Common myeloid progenitor, CD34-positive (primary cell): ENCODE measurements at regions of chr11 and their contacts with region 1.

Region 1: GRCh38 chr11:46489661-46490560 is 98.3 kb upstream of the CHRM4 start:
- DNase-seq: peak; percentile 72 to 82 (median 78)
- H3K4me3 ChIP-seq: no peak overlapping the region
- H3K27ac ChIP-seq: no peak overlapping the region
- H3K4me1 ChIP-seq: peaks cover 4 to 9% (median 8%) of the 10 kb centered on the region in 4 experiments
- H3K27me3 ChIP-seq: no peaks in the 10 kb centered on the region

Region 2: DNA sequence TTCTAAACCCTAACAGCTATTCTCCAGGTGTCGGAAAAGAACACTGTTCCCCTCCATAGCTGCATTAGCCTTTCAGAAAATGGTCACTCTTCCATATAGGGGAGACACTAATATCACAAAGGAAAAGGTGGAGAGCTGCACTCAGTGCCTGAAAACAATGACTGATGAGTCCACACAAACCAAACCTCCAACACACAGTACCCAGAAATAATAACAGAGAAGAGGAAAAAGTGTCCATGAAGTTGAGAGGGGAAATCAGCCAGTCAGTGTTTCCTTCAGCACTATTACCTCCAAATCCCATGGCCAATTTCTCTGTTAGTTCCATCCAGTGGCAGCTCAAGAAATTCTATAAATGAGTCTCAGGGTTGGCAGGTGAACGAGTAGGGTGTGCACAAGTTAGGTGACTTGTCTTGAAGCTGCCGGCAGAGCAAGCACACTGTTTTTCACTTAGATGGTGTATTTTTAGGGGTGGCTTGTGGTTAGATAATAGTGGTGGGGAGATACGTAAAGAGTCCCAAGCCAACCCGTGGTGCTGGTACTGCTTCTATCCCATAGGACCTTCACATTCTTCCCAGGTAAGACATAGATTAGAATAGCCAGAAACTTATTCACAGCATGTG is 13.9 kb before region 1 on chr11:
- CTCF ChIA-PET with region 1: interaction called, 81 read pairs
- POLR2A ChIA-PET with region 1: no interaction called
- DNase-seq: no peak
- H3K4me3 ChIP-seq: no peak overlapping the region
- H3K27ac ChIP-seq: no peak overlapping the region
- H3K4me1 ChIP-seq: no peaks in the 10 kb centered on the region
- H3K27me3 ChIP-seq: no peaks in the 10 kb centered on the region

Region 3: DNA sequence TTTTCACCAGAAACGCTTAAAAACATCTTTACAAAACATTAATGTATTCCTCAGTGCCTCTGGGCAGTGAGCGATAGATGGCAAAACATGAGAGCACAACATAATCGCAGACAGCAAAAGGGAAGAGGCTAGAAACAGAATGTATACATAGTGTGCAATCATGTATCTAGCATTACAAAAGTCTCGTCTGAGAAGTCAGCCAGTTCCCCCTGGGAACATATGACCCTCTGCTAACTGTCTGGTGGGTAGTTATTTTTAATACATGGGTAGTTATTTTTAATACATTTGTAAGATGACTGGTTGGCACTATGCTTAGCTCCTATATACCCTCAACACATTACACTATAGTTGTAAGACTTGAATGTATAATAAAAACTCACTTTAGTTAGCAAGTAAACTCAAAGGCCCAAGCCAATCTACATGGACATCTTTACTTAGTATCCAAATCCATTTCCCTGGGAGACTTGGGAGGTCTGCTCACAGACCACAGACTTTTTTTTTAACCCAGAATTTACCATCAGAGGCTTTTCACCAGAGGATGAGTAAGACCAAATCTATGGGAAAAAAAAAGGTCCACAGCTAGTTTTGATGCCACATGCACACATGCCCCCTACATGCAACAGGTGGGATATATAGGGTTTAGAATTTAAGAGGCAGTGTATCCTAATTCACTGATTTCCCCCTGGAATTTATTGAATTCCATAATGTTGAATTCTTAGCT is 32.2 kb after region 1 on chr11:
- CTCF ChIA-PET with region 1: interaction called, 18 read pairs
- POLR2A ChIA-PET with region 1: interaction called, 3 read pairs
- DNase-seq: peak in 2 of 3 donors; percentile 36 to 37
- H3K4me3 ChIP-seq: no peak overlapping the region
- H3K27ac ChIP-seq: no peak overlapping the region
- H3K4me1 ChIP-seq: peaks cover 0 to 4% (median 0%) of the 10 kb centered on the region in 4 experiments
- H3K27me3 ChIP-seq: no peaks in the 10 kb centered on the region

Region 4: GRCh38 chr11:46554205-46555055 is 64.5 kb after region 1 on chr11:
- CTCF ChIA-PET with region 1: interaction called, 12 read pairs
- POLR2A ChIA-PET with region 1: no interaction called
- DNase-seq: peak in 2 of 3 donors; percentile 27 to 43
- H3K4me3 ChIP-seq: peak overlapping the region in 2 of 7 experiments; percentile 19 to 51
- H3K27ac ChIP-seq: peak overlapping the region; percentile 16 to 62
- H3K4me1 ChIP-seq: peaks cover 5 to 39% (median 18%) of the 10 kb centered on the region in 4 experiments
- H3K27me3 ChIP-seq: no peaks in the 10 kb centered on the region